ACHN (cell line): ENCODE measurements at regions of chr3 and their contacts with region 1.

Region 1: DNA sequence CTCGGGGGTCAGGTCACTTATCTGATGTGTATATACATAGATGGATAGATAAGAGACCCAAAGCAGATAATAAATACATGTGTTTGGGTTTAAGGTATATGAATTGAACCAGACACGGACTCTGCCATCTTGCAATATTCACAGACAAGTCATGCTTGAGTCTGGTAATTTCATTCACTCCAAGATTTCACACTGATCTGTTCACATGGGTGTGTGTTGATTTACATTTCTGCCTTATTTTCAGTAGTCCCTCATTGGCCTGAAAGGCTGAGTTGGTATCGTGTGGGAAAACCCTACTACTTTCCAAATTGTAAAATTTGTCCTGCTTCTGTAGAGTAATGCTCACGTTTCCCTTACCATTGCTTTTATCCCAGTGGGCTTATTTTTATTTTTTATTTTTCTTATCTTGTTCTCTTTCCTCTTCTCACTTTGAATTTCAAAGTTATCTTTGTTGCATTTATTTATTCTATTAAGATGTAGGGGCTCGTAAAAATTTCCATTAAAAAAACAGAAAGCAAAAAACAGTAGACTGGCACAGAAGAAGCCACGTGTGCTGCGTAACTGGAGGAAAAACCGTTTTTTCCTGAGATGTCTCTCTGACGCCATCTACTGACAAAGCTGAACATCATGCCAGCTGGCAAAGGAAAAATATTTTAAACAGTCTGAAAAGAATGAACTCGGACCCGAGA is 10.8 kb upstream of the MFSD1 start:
- DNase-seq: peak; percentile 76

Region 2: GRCh38 chr3:158458470-158458869 is 332.6 kb before region 1 on chr3:
- in situ Hi-C with region 1: no loop called
- DNase-seq: no peak

Region 3: GRCh38 chr3:158659454-158660237 is 131.4 kb before region 1 on chr3:
- in situ Hi-C with region 1: loop called (anchors 25 kb)
- DNase-seq: peak; percentile 60

Region 4: GRCh38 chr3:158683216-158683962 is 107.7 kb before region 1 on chr3:
- in situ Hi-C with region 1: no loop called
- DNase-seq: no peak

Region 5: GRCh38 chr3:158918008-158918407 is 127.0 kb after region 1 on chr3:
- in situ Hi-C with region 1: no loop called
- DNase-seq: peak; percentile 89